Gastrocnemius medialis (tissue), 4 donors: ENCODE measurements at regions of chr1 and their contacts with region 1.

Region 1: DNA sequence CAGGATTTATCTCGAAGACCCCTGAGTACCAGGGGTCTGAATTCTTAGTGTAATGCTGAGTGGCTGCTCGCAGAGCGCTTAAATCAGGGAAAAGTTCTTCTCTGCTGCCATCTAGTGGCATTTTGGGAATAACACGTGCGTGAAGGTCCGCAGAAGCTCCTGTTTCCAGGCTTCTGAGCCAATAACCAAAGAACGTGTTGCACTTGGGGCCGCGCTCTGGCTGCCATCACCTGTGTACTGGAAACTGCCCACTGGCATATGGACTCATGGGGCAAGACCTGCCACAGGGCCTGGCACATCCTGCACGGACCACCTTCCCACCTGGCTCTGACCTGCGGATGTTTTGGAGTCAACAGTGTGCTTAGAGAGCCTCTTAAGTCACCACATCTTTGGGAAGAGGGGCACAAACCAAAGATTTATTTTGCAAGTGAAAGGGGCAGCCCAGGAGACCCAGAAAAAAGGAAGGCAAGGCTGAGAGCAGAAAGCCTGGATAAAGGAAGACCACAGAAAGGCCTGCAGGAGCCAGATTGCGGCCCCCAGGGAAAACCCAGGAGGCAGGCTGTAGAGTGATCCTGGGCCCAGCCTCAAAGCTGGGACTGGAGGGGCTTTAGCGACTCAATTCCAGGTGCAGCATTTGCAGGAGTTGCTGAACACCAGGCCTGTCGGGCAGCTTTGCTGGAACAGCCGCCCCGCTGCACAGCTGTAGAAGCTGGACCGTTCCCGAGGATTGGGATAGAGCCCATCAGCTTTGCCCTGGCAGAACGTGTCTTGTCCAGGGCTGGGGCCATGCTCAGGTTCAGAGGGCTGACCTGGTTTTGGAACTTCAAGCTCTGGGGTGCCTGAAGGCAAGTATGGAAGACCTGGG is 13.0 kb downstream of the CHIT1 start:
- DNase-seq: peak; percentile 37 to 58
- ATAC-seq: peak; percentile 88 to 93
- H3K4me3 ChIP-seq: no peak overlapping the region
- H3K27ac ChIP-seq: no peak overlapping the region
- H3K4me1 ChIP-seq: peaks cover 3 to 8% of the 10 kb centered on the region in 2 donors
- H3K27me3 ChIP-seq: no peaks in the 10 kb centered on the region
- CTCF ChIP-seq: peak; percentile 74 to 88 (median 82)
- POLR2A ChIP-seq: no peak

Region 2: GRCh38 chr1:203057911-203058675 is 158.4 kb before region 1 on chr1:
- in situ Hi-C with region 1: loop called in 1 of 4 experiments (anchors 10 kb)
- intact Hi-C with region 1: no loop called
- DNase-seq: no peak
- ATAC-seq: no peak
- H3K4me3 ChIP-seq: no peak overlapping the region
- H3K27ac ChIP-seq: no peak overlapping the region
- H3K4me1 ChIP-seq: no peaks in the 10 kb centered on the region
- H3K27me3 ChIP-seq: no peaks in the 10 kb centered on the region
- CTCF ChIP-seq: no peak
- POLR2A ChIP-seq: no peak

Region 3: DNA sequence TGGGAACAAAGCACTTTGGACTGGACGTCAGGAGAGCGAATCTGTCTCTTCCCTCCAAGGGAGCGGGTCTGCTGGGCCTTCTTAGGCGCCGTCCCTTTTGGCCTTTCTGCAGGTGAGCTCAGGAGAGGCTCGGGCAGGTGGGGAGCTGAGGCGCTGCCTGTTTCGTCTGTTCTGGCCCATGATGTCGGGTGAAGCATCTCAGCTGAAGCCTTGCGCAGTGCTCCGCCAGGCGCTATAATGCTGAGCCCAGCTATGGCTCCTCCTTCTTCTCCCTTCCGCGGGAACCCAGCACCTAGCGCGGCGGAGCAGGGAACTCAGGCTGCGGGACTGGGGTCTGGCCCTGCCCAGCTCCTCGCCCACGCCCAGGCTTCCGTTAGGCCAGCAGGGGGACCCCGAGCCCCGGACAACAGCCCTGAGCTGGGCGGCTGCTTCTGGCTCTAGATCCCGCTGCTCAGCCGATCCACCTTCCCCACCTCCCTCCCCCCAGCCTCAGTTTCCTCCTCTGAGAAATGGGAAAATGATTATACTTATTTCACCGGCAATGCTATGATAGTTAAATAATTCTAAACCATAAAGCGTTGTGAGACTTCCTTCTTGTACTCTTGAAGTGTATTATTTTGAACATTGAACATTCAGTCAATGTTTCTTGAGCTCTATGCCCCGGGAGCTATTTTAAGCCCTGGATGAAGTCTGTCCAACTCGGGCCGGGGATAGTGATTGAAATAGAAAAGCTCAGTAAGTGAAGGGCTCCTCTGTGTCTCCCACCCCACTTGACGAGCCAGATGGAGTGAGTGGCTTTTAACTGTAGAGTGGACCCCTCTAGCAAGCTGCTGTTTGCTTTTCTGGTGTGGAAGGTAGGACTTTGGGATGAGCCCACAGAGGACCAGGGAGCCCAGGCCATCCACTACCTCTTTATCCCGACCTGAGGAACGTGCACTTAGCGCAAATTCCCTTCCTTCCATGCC is 98.6 kb before region 1 on chr1:
- in situ Hi-C with region 1: loop called (anchors 5 to 10 kb)
- intact Hi-C with region 1: loop called (anchors 1 kb)
- DNase-seq: peak; percentile 60 to 73
- ATAC-seq: peak; percentile 77 to 90
- H3K4me3 ChIP-seq: peak overlapping the region in 2 of 4 donors; percentile 16 to 22
- H3K27ac ChIP-seq: no peak overlapping the region
- H3K4me1 ChIP-seq: peaks cover 6 to 9% of the 10 kb centered on the region in 2 donors
- H3K27me3 ChIP-seq: no peaks in the 10 kb centered on the region
- CTCF ChIP-seq: peak; percentile 72 to 90 (median 88)
- POLR2A ChIP-seq: no peak

Region 4: DNA sequence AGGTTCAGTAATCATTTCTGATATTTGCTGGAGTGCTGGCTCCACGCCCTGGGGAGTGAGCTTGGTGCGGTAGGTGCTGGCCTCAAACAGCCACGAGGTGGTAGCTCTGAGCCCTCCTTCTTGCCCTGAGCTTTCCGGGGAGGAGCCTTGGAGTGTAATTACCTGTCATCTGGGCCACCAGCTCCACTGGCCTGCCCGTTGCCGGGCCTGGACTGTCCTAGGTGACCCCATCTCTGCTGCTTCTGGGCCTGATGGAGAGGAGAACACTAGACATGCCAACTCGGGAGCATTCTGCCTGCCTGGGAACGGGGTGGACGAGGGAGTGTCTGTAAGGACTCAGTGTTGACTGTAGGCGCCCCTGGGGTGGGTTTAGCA is 50.0 kb before region 1 on chr1:
- in situ Hi-C with region 1: loop called in 1 of 4 experiments (anchors 10 kb)
- intact Hi-C with region 1: no loop called
- DNase-seq: no peak
- ATAC-seq: peak in 1 of 2 donors; percentile 24
- H3K4me3 ChIP-seq: no peak overlapping the region
- H3K27ac ChIP-seq: no peak overlapping the region
- H3K4me1 ChIP-seq: no peaks in the 10 kb centered on the region
- H3K27me3 ChIP-seq: peaks cover 0 to 4% (median 0%) of the 10 kb centered on the region in 3 donors
- CTCF ChIP-seq: peak in 3 of 5 experiments; percentile 13 to 29 (median 21)
- POLR2A ChIP-seq: no peak